Activated T-helper 1 cell treated with anti-CD3 and anti-CD28 coated beads, Interleukin-12 subunit alpha, Interleukin-12 subunit beta, Interleukin-2, Interleukin-4 antibody, amounts not matched to agents 30 ng/mL and 10 ng/mL and 1 ng/mL, durations not matched to agents 14 hours and 24 hours and 36 hours (primary cell): ENCODE measurements at regions of chr1 and their contacts with region 1.

Region 1: DNA sequence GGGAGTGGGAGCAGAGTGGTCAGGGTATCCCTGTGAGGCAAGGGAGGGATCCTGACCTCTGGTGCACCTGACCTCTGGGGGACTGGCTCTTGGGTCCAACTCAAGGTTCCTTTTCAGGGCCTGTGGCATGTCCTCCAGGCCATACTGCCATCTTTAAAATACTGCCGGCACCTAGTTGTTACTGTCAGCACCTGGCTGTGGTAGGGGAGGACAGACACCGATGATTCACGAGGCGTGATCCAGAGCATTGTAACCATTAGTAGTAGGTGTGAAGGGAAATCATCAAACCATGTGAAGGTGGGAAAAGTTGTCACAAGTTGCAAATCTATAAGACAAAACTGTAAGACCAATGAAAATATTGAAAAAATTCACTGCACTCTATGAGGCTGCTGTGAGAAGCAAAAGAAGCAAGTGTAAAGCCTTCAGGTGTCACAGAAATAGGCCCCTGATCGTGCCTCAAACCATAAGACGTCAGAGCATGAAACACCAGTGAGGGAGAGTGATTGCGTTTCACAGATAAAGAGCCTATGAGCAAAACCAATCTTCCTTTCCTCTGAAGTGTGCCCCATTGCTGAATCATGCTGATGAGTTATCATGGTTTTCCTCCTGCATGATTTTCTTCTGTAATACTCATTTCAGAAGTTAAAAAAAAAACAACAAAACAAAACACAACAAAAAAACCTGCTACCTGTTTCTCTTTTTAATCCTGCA is 55.3 kb downstream of the CDC7 start:
- DNase-seq: peak; percentile 79
- H3K4me3 Mint-ChIP-seq: peak overlapping the region; percentile 67
- H3K27ac Mint-ChIP-seq: peak overlapping the region; percentile 83
- H3K4me1 Mint-ChIP-seq: peaks cover 90% of the 10 kb centered on the region
- H3K27me3 Mint-ChIP-seq: no peaks in the 10 kb centered on the region

Region 2: DNA sequence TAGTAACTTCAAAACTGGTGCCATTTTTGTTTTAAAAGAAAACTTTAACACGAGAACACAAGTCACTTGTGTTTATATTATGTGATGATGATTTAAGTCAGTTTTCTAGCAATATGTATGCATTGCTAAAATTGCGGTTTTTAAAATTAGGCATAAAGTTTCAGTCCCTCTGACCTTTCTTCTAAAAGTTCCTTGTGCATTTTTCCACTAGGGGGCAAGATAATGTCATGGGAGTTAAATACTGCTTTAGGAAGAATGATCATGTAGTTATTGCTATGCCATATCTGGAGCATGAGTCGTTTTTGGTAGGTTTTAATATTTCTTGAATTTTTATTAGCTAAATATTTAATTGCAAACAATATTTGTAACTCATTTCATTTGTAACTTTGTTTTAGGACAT is 44.6 kb before region 1 on chr1:
- intact Hi-C with region 1: loop called (anchors 2 kb)
- DNase-seq: no peak
- H3K4me3 Mint-ChIP-seq: no peak overlapping the region
- H3K27ac Mint-ChIP-seq: no peak overlapping the region
- H3K4me1 Mint-ChIP-seq: peaks cover 25% of the 10 kb centered on the region
- H3K27me3 Mint-ChIP-seq: no peaks in the 10 kb centered on the region

Region 3: GRCh38 chr1:91591175-91591968 is 35.4 kb after region 1 on chr1:
- intact Hi-C with region 1: loop called (anchors 1 kb)
- DNase-seq: no peak
- H3K4me3 Mint-ChIP-seq: peak overlapping the region; percentile 73
- H3K27ac Mint-ChIP-seq: peak overlapping the region; percentile 79
- H3K4me1 Mint-ChIP-seq: peaks cover 40% of the 10 kb centered on the region
- H3K27me3 Mint-ChIP-seq: peaks cover 4% of the 10 kb centered on the region

Region 4: DNA sequence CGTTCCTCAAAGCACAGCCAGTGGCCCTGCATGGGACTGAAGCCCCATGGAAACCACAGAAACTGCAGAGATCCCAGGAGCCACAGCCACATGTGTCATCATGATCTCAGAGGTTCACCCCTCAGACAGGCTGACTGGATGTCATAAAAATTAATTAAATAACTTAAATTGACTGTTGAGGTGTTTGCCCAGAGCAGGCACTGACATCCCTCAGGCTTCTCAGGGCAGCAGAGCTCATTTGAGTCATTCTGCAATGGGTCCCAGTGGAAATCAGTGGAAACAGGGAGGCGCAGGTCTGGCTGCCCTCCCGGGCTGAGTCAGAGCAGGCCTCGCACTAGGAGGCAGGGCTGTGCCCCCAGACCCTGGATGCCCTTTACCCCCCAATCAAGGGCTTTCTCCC is 79.8 kb after region 1 on chr1:
- intact Hi-C with region 1: no loop called
- DNase-seq: no peak
- H3K4me3 Mint-ChIP-seq: no peak overlapping the region
- H3K27ac Mint-ChIP-seq: no peak overlapping the region
- H3K4me1 Mint-ChIP-seq: peaks cover 7% of the 10 kb centered on the region
- H3K27me3 Mint-ChIP-seq: peaks cover 2% of the 10 kb centered on the region

Region 5: DNA sequence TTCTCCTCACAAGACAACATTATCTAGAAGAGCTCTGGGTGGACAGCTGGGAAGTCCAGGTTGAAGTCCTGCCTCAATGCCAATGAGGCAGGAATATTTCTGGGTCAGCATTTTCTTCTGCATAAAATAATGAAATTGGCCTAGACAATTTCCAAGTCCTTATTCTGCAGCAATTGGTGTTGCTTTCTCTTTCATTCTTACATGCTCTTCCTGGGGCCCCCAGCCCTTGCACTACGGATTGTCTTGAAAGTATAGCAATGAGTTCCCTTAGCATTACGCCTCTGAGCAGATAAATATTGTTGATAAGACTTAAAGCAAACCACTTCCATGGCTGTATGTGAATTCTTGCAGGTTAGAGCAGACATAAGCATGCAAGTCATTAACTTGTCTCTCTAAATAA is 141.4 kb after region 1 on chr1:
- intact Hi-C with region 1: loop called (anchors 2 kb)
- DNase-seq: peak; percentile 69
- H3K4me3 Mint-ChIP-seq: peak overlapping the region; percentile 72
- H3K27ac Mint-ChIP-seq: peak overlapping the region; percentile 86
- H3K4me1 Mint-ChIP-seq: peaks cover 41% of the 10 kb centered on the region
- H3K27me3 Mint-ChIP-seq: peaks cover 1% of the 10 kb centered on the region

Region 6: DNA sequence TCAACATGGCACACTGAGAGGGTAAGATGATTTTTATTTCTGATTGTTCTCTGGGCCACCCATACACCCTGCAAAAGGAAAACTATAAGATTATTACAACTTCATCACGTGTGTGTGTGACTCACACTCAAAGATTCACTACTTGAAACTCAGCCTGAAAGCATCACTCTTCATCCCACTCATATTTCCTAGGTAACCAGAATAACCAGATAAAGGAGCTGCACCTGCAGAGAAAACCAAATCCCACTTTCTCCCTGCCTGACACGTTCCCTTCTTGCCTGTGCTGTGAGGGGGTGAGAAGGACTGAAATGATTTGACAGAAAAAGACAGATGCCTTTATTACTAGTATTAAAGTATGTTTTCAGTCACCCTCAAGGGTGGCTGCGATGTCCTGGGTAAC is 198.4 kb after region 1 on chr1:
- intact Hi-C with region 1: loop called (anchors 1 kb)
- DNase-seq: no peak
- H3K4me3 Mint-ChIP-seq: no peak overlapping the region
- H3K27ac Mint-ChIP-seq: peak overlapping the region; percentile 67
- H3K4me1 Mint-ChIP-seq: peaks cover 46% of the 10 kb centered on the region
- H3K27me3 Mint-ChIP-seq: peaks cover 6% of the 10 kb centered on the region

Region 7: GRCh38 chr1:92365378-92366039 is 809.5 kb after region 1 on chr1:
- intact Hi-C with region 1: loop called (anchors 1 kb)
- DNase-seq: peak; percentile 10
- H3K4me3 Mint-ChIP-seq: peak overlapping the region; percentile 3
- H3K27ac Mint-ChIP-seq: peak overlapping the region; percentile 76
- H3K4me1 Mint-ChIP-seq: peaks cover 59% of the 10 kb centered on the region
- H3K27me3 Mint-ChIP-seq: no peaks in the 10 kb centered on the region